H1 (cell line): ENCODE measurements at regions of chr6 and their contacts with region 1.

Region 1: DNA sequence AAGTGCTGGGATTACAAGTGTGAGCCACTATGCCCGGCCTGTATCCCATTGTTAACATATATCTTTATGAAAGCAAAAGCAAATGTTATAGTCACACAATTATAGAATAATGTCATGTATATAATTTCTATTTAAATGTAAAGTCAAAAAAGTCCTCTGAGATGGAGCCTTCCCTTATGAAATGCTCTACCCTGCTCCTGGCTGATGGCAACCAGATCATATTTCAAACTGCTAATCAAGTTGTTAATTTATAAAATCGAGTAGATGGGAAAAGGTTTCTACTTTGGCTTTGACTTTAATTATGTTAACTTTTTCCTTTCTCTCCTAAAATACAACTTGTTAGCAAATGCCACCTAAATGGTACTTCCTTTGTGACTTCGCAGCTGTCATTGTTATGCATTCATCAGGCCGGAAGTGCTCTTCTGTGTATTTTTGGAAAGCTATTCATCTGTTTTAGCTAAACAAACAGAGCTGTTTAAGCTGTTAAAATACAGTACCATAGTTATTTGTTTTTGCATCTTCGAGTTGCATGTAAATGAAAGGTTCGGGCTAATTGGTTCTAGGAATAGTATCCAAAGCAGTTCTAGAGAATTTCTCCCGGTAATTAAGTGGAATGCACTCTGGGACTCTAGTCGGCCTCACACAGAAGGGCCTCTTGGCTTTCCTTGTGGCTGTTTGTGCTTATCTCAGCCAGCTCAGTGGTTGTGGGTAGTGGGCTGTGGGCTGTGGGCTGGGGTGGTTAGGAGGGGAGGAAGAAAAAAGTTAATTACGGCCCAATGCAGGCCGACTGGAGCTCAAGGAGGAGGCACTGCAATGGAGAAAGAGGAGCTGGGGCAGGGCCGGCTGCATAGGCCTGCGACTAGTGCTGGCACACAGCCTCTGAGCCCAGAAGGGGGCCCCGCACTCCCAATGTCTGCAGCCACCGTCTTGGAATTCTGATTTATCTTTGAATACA is 34.8 kb downstream of the SLC35D3 start:
- DNase-seq: peak; percentile 65 to 70
- H3K4me3 ChIP-seq: peak overlapping the region in 1 of 4 experiments; percentile 1; a peak in 1 of 8 replicates
- H3K27ac ChIP-seq: peak overlapping the region; percentile 35; the same call in 1 of the 2 replicates
- H3K4me1 ChIP-seq: peaks cover 0 to 33% (median 16%) of the 10 kb centered on the region in 4 experiments; a peak in 6 of 7 replicates
- H3K27me3 ChIP-seq: no peaks in the 10 kb centered on the region
- CTCF ChIP-seq: peak; percentile 32 to 49 (median 32)
- EP300 ChIP-seq: peak in 1 of 2 experiments; percentile 81; a peak in 2 of 3 replicates
- POLR2A ChIP-seq: no peak; a peak in 1 of 3 replicates
- RAD21 ChIP-seq: peak; percentile 25 to 48; a peak in 3 of 4 replicates

Region 2: DNA sequence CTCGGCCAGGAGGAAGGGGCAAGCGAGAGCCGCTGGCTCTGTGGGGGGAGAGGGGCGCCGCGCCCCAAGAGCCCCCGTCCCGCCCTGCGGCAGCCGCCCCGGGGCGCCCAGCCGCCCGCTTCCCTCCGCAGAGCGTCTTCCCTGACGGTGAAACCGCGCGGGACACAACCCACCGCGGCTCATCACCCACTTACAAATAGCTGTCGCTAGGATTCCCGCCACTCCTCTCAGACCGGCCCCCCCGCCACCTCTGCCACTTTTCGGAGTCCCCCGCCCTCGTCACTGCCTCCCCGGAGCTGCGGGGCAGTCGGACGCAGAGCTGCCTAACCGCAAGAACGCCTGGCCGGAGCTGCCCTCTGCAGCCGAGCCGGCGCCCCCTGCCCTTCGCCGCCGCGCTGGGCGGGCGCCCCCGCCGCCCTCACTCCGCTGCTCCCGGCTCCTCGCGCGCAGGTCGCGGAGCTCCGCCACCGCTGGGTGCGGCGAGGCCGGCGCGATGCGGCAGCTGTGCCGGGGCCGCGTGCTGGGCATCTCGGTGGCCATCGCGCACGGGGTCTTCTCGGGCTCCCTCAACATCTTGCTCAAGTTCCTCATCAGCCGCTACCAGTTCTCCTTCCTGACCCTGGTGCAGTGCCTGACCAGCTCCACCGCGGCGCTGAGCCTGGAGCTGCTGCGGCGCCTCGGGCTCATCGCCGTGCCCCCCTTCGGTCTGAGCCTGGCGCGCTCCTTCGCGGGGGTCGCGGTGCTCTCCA is 34.8 kb before region 1 on chr6 and contains the start of gene SLC35D3:
- CTCF ChIA-PET with region 1: interaction called, 5 read pairs
- POLR2A ChIA-PET with region 1: interaction called, 26 read pairs
- DNase-seq: peak in 1 of 2 experiments; percentile 73
- H3K4me3 ChIP-seq: peak within 1 kb of the TSS; percentile 37 to 60 (median 48)
- H3K27ac ChIP-seq: no peak within 1 kb of the TSS
- H3K4me1 ChIP-seq: peaks cover 0 to 12% (median 10%) of the 10 kb centered on the region in 4 experiments; a peak in 5 of 7 replicates
- H3K27me3 ChIP-seq: peaks cover 30 to 53% (median 52%) of the 10 kb centered on the region in 4 experiments
- CTCF ChIP-seq: no peak
- EP300 ChIP-seq: no peak
- POLR2A ChIP-seq: no peak
- RAD21 ChIP-seq: no peak
- total RNA-seq, gene SLC35D3: 0.39 and 0.57 TPM in 2 replicates

Region 3: GRCh38 chr6:136945711-136946121 is 11.2 kb before region 1 on chr6:
- CTCF ChIA-PET with region 1: interaction called, 3 read pairs
- POLR2A ChIA-PET with region 1: interaction called, 23 read pairs
- DNase-seq: no peak
- H3K4me3 ChIP-seq: no peak overlapping the region
- H3K27ac ChIP-seq: no peak overlapping the region
- H3K4me1 ChIP-seq: no peaks in the 10 kb centered on the region; a peak in 1 of 7 replicates
- H3K27me3 ChIP-seq: no peaks in the 10 kb centered on the region
- CTCF ChIP-seq: no peak
- EP300 ChIP-seq: no peak
- POLR2A ChIP-seq: no peak
- RAD21 ChIP-seq: no peak